Stomach (tissue), 19 donors: ENCODE measurements at regions of chr17 and their contacts with region 1.

Region 1: DNA sequence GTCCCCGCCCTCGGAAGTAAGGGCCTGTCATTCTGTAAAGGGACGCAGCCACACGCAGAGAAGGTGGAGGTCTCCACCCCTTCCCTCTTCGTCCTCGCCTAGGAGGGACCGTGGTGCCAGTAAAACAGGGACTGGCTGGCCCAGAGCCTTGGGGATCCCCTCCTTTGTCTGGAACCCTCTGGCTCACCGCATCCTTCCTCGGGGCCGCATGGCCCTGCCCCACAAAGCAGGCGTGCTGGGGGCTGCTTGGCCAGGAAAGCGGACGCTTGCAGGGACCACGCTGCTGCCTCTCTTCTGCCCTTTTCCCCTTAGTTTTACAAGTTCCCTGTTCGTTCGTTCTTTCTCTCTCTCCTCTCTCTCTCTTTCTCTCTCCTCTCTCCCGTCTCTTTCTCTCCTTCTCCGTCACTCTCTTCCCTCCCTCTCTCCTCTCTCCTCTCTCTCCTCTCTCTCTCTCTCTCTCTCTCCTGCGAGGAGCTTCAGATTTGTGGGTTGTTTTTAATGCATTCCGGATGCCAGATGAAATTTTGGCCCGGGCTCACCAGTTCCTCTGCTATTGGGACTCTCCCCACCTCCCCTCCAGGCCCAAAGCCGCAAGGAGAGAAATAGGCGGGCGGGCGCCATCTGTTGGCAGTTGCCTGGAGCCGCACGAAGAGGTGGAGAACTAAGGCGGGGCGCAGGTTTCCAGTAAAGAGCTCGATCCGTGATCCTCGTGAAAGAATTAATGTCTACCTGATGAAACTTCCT is 35.1 kb upstream of the CDRT4 start:
- DNase-seq: peak; percentile 80 to 94
- H3K4me3 ChIP-seq: peak overlapping the region; percentile 19 to 30 (median 22)
- H3K27ac ChIP-seq: peak overlapping the region; percentile 51 to 82 (median 74)
- H3K4me1 ChIP-seq: peaks cover 0 to 17% (median 0%) of the 10 kb centered on the region in 4 donors
- H3K27me3 ChIP-seq: no peaks in the 10 kb centered on the region
- CTCF ChIP-seq: peak in 5 of 7 experiments; percentile 70 to 81 (median 77)
- EP300 ChIP-seq: no peak
- POLR2A ChIP-seq: no peak

Region 2: DNA sequence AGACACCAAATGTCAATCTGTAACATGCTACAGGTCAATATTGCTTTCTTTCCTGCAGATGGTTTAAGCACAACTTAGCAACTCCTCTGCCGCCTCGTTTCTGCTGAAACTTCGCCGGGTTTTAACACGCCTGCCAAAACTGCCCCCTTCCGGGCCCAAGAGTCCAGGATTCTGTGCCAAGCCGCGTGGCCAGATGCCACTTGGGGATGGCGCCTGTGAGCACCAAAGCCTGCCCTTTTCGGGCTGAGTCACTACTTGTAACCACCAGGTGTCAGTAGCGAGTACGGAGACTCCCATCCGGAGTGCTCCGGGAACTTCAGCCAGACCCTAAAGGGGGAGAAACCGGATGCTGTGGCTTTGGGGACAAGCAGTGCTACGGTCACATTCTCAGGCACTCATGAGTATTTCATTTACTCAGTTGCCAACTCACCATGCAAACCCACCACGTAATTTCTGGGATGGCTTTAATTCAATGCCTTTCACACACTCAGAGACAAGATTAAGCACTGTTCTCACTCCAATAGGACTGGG is 245.2 kb before region 1 on chr17:
- intact Hi-C with region 1: loop called (anchors 5 kb)
- DNase-seq: peak; percentile 76 to 89
- H3K4me3 ChIP-seq: peak overlapping the region; percentile 21 to 57 (median 42)
- H3K27ac ChIP-seq: peak overlapping the region in 4 of 5 donors; percentile 27 to 99 (median 95)
- H3K4me1 ChIP-seq: peaks cover 40 to 94% (median 78%) of the 10 kb centered on the region in 4 donors
- H3K27me3 ChIP-seq: peaks cover 0 to 17% (median 14%) of the 10 kb centered on the region in 3 donors
- CTCF ChIP-seq: peak in 5 of 7 experiments; percentile 72 to 83 (median 78)
- EP300 ChIP-seq: no peak
- POLR2A ChIP-seq: no peak